CD4-positive, alpha-beta memory T cell (primary cell): ENCODE measurements at regions of chr17 and their contacts with region 1.

Region 1: DNA sequence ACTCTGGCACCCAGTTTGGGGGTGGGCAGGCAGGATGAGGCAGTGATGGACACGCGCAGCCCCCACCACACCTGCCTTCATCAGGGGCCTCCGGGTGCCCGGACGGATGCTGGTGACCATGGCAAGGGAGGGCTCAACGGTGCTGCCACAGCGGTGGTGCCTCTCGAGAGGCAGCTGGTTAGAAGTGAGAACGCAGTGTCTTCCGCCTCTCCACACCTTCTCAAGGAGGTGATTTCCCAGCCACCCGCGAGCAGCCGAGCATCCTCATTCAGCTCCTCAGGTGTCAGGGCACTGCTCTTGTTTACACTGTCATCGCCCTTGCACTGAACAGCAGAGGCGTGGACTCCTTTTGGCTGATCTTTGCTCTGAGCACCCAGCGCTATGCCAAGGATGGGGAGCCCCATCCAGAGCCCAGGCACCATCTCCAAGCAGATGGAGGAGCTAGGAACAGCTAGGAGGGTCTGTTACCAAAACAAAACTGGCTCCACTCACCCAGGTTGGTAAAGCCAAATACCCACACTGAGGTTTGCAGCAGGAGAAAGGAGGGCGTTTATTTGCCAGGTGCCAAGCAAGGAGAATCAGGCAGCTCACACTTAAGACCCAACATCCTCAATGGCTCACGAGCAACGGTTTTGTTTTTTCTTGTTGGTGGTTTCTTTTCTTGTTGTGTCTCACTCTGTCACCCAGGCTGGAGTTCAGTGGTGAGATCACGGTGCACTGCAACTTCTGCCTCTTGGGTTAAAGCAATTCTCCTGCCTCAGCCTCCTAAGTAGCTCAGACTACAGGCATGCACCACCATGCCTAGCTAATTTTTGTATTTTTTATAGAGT is 174.3 kb upstream of the TNRC6C start:
- DNase-seq: peak; percentile 76 to 90 (median 81)
- H3K4me3 ChIP-seq: no peak overlapping the region
- H3K4me3 Mint-ChIP-seq: peak overlapping the region; percentile 52 to 84 (median 67)
- H3K27ac ChIP-seq: peak overlapping the region; percentile 76
- H3K27ac Mint-ChIP-seq: peak overlapping the region; percentile 94 to 99 (median 97)
- H3K4me1 ChIP-seq: peaks cover 26% of the 10 kb centered on the region
- H3K4me1 Mint-ChIP-seq: peaks cover 13 to 26% (median 18%) of the 10 kb centered on the region in 4 donors
- H3K27me3 ChIP-seq: no peaks in the 10 kb centered on the region
- H3K27me3 Mint-ChIP-seq: no peaks in the 10 kb centered on the region

Region 2: DNA sequence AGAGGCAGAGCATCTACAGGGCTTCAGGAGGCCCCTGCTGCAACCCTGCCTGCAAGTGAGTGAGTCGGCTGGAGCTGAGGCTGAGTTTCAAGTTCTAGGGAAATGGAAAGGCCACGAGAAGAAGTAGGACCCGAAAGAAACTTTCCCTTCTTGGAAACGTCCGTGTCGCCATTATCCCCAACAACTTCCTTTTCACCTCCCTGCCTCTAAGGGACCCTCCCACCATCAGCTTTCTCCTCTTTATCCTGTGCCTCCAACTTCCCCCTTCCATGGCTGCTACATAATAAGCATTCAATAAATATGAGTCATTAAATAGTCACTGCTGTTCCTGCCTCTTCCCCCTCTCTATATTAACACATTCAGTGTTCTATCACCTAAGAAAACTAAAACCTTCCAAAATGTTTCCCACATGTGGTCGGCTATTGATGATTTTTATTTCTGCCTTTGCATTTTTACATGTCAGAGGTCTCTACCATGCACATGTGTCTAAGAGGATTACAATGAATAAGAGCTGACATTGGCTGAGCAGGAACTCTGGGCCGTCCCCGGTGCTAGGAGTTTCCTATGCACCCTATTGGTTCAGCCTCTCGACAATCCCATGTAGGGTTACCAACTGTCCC is 58.4 kb after region 1 on chr17:
- CTCF ChIA-PET with region 1: no interaction called
- POLR2A ChIA-PET with region 1: interaction called, 12 read pairs
- intact Hi-C with region 1: loop called (anchors 10 kb)
- DNase-seq: no peak
- H3K4me3 ChIP-seq: no peak overlapping the region
- H3K4me3 Mint-ChIP-seq: peak overlapping the region in 7 of 8 donors; percentile 4 to 85 (median 69)
- H3K27ac ChIP-seq: no peak overlapping the region
- H3K27ac Mint-ChIP-seq: peak overlapping the region; percentile 87 to 97 (median 93)
- H3K4me1 ChIP-seq: peaks cover 63% of the 10 kb centered on the region
- H3K4me1 Mint-ChIP-seq: peaks cover 34 to 74% (median 43%) of the 10 kb centered on the region in 4 donors
- H3K27me3 ChIP-seq: no peaks in the 10 kb centered on the region
- H3K27me3 Mint-ChIP-seq: no peaks in the 10 kb centered on the region